Activated B cell treated with CpG ODN at 0.5 μM for 24 hours (primary cell): ENCODE measurements at regions of chr7 and their contacts with region 1.

Region 1: GRCh38 chr7:7251742-7252141 is 69.4 kb downstream of the C1GALT1 start:
- DNase-seq: no peak
- ATAC-seq: peak; percentile 96
- H3K4me3 Mint-ChIP-seq: peak overlapping the region; percentile 49
- H3K27ac Mint-ChIP-seq: peak overlapping the region; percentile 96
- H3K4me1 Mint-ChIP-seq: peaks cover 85% of the 10 kb centered on the region
- H3K27me3 Mint-ChIP-seq: no peaks in the 10 kb centered on the region
- CTCF ChIP-seq: no peak

Region 2: DNA sequence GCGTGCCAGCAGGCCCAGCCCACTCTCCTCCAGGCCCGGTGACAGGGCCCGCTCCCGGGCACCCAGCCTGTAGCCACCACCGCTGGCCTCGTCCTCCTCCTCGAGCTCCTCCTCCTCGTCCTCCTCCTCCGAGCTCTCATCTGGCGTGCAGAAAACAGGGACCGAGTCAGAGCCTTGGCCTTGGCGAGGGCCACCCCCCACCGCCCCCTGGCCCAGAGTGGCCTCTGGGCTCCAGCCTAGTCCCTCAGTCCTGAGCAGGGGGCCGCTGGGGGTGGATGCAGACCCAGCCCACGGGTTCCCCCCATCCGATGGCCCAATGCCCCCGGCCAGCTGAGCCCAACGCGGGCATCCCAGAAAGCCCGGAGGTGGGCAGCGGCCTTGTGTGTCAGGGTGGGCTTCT is 1906.1 kb before region 1 on chr7:
- CTCF ChIA-PET with region 1: no interaction called
- POLR2A ChIA-PET with region 1: no interaction called
- intact Hi-C with region 1: no loop called
- DNase-seq: no peak
- ATAC-seq: no peak
- H3K4me3 Mint-ChIP-seq: no peak overlapping the region
- H3K27ac Mint-ChIP-seq: no peak overlapping the region
- H3K4me1 Mint-ChIP-seq: no peaks in the 10 kb centered on the region
- H3K27me3 Mint-ChIP-seq: no peaks in the 10 kb centered on the region
- CTCF ChIP-seq: no peak

Region 3: DNA sequence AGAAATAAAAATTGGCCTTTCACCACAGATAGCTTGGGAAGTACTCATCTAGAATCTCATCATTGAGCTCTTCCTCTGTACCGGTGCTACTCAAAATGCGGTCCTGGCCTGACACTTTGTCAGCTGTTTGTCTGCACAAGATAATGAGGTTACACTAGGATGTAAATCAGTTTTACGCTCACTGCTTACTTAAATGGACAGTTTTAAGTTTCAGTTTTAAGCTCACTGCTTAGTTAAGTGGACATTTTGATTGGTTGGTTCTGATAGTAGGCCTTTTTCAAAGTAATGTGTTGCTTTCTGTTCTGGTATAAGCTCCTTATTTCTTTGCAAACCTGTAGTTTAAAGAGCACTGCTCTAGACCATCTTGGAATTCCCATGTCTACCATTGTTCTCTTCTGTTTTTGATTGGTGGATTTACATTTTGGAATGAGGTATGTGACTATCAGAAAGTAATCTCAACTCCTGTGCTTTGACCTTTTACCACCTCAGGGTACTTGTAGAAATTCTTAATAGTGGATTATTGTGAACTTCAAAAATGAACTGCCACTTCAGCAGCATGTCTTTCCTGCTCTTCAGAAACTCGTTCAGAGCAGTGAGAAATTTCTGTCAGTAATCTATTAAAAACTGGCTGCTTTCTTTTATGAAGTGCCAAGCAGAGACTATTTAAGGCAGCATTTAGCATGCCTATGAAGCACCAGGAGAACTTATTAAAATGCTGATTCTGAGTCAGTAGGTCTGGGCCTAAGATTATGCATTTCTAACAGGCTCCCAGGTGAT is 14.4 kb before region 1 on chr7:
- CTCF ChIA-PET with region 1: no interaction called
- POLR2A ChIA-PET with region 1: interaction called, 4 read pairs
- intact Hi-C with region 1: loop called (anchors 2 kb)
- DNase-seq: no peak
- ATAC-seq: no peak
- H3K4me3 Mint-ChIP-seq: no peak overlapping the region
- H3K27ac Mint-ChIP-seq: peak overlapping the region; percentile 41
- H3K4me1 Mint-ChIP-seq: peaks cover 19% of the 10 kb centered on the region
- H3K27me3 Mint-ChIP-seq: no peaks in the 10 kb centered on the region
- CTCF ChIP-seq: no peak

Region 4: DNA sequence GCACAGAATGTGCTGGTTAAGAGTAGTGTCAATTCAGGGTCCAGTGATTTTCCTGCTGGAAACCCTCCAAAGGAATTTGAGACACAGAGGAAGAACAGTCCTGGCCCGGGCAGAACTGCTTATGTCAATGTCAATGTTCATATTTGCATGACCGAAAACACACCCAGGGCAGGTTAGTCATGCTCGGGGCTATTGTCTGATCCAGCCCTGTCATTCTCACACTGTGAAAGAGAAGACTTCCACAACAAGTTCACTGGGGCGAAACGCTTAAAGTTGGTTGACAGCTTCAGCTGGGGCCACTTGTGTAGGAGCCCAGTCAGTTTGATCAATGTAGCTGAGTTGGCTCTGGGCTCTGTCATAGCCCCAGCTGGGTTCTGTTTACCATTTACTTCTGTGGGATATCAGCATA is 70.0 kb after region 1 on chr7:
- CTCF ChIA-PET with region 1: no interaction called
- POLR2A ChIA-PET with region 1: no interaction called
- intact Hi-C with region 1: loop called (anchors 5 kb)
- DNase-seq: peak; percentile 18
- ATAC-seq: peak; percentile 95
- H3K4me3 Mint-ChIP-seq: no peak overlapping the region
- H3K27ac Mint-ChIP-seq: peak overlapping the region; percentile 33
- H3K4me1 Mint-ChIP-seq: peaks cover 27% of the 10 kb centered on the region
- H3K27me3 Mint-ChIP-seq: no peaks in the 10 kb centered on the region
- CTCF ChIP-seq: no peak

Region 5: GRCh38 chr7:7542251-7542835 is 290.6 kb after region 1 on chr7:
- CTCF ChIA-PET with region 1: no interaction called
- POLR2A ChIA-PET with region 1: no interaction called
- intact Hi-C with region 1: no loop called
- DNase-seq: no peak
- ATAC-seq: no peak
- H3K4me3 Mint-ChIP-seq: no peak overlapping the region
- H3K27ac Mint-ChIP-seq: no peak overlapping the region
- H3K4me1 Mint-ChIP-seq: peaks cover 2% of the 10 kb centered on the region
- H3K27me3 Mint-ChIP-seq: peaks cover 6% of the 10 kb centered on the region
- CTCF ChIP-seq: no peak